AG04449 (cell line): ENCODE measurements at regions of chr16 and their contacts with region 1.

Region 1: GRCh38 chr16:70573451-70574121 is 50.0 kb downstream of the SF3B3 start:
- DNase-seq: peak; percentile 68
- H3K4me3 ChIP-seq: no peak overlapping the region
- CTCF ChIP-seq: no peak

Region 2: DNA sequence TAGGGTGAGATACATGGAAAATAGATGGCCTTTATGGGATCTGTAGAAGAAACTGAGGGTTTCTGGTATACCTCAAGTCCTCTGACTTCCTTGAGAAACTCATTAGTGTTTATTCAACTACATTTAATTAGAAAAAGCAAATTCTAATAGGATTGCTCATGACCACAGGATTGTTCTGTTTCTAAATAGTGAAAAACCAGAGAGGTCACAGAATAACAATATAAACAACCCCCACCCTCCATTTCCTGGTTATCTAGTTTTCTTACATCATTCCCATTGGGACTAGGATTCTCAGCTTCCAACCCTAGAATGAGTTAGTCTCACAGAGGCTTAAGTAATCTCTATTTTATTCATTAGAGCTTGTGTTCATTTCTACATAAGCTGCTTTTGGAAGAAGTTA is 19.9 kb before region 1 on chr16:
- CTCF ChIA-PET with region 1: interaction called, 11 read pairs
- POLR2A ChIA-PET with region 1: no interaction called
- DNase-seq: peak; percentile 64
- H3K4me3 ChIP-seq: no peak overlapping the region
- CTCF ChIP-seq: no peak

Region 3: GRCh38 chr16:70561623-70562022 is 12.0 kb before region 1 on chr16:
- CTCF ChIA-PET with region 1: interaction called, 12 read pairs
- POLR2A ChIA-PET with region 1: interaction called, 7 read pairs
- DNase-seq: no peak
- H3K4me3 ChIP-seq: no peak overlapping the region
- CTCF ChIP-seq: no peak